Pancreas (tissue), 10 donors: ENCODE measurements at regions of chr19 and their contacts with region 1.

Region 1: GRCh38 chr19:5814852-5815246 is 10.0 kb downstream of the NRTN start:
- DNase-seq: no peak
- ATAC-seq: no peak
- H3K4me3 ChIP-seq: no peak overlapping the region
- H3K27ac ChIP-seq: no peak overlapping the region
- H3K4me1 ChIP-seq: no peaks in the 10 kb centered on the region
- H3K27me3 ChIP-seq: no peaks in the 10 kb centered on the region
- CTCF ChIP-seq: no peak

Region 2: DNA sequence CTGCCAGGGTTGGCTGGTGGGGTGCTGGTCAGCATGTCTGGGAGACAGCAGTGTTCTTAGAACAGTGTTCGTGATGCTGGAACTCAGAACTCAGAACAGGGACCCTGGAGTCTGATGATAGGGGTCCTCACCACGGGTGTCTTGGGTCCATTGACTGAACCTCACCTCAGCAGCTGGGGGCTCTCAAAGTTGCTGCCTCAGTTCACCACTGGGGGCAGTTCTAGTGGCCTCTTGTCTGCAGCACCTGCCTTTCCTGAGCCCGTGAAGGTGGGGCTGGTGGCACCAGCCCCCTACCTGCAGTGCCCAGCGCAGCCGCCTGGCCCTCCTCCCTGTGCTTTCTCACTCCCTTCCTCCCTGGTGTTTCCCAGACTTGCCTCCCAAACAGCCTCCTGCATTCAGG is 163.5 kb before region 1 on chr19:
- intact Hi-C with region 1: no loop called
- DNase-seq: peak in 1 of 6 donors; percentile 32
- ATAC-seq: no peak
- H3K4me3 ChIP-seq: no peak overlapping the region
- H3K27ac ChIP-seq: no peak overlapping the region
- H3K4me1 ChIP-seq: no peaks in the 10 kb centered on the region
- H3K27me3 ChIP-seq: no peaks in the 10 kb centered on the region
- CTCF ChIP-seq: no peak

Region 3: GRCh38 chr19:5897189-5897969 is 82.5 kb after region 1 on chr19:
- intact Hi-C with region 1: loop called in 1 of 3 experiments (anchors 5 kb)
- DNase-seq: no peak
- ATAC-seq: no peak
- H3K4me3 ChIP-seq: no peak overlapping the region
- H3K27ac ChIP-seq: no peak overlapping the region
- H3K4me1 ChIP-seq: no peaks in the 10 kb centered on the region
- H3K27me3 ChIP-seq: no peaks in the 10 kb centered on the region
- CTCF ChIP-seq: no peak